HepG2 (cell line): ENCODE measurements at regions of chr14 and their contacts with region 1.

Region 1: DNA sequence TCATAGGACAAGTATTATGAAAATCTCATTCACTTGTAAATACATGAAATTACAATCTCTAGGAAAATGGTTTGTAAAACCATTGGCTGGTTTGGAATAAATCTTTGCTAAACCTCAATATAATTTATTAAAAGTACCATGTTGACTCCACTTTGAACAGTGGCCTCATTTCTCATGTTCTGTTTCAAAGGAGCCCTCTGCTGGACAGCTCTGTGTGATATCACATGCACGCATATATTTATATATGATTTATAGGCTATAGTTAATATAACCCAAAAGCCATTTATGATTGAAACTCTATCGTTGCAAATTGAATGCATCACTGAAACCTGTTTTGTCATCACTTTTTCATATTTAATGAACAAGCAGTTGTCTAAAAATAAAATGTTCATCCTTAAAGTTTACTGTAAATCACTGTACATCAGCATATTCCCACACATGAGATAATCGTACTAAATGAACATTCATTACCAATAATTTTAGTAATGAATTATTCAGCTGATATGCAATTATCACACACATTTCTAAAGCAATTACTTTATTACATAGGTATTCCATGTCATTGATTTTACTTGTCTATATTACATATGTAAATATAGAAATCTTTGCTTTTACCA is 493.8 kb downstream of the NPAS3 start:
- DNase-seq: peak; percentile 42
- ATAC-seq: peak; percentile 69
- H3K4me3 ChIP-seq: no peak overlapping the region
- H3K27ac ChIP-seq: no peak overlapping the region
- H3K4me1 ChIP-seq: no peaks in the 10 kb centered on the region
- H3K27me3 ChIP-seq: no peaks in the 10 kb centered on the region; a peak in 1 of 5 replicates
- CTCF ChIP-seq: peak; percentile 32
- EP300 ChIP-seq: no peak
- POLR2A ChIP-seq: no peak
- RAD21 ChIP-seq: no peak

Region 2: GRCh38 chr14:32588448-32589320 is 843.8 kb before region 1 on chr14:
- CTCF ChIA-PET with region 1: no interaction called
- POLR2A ChIA-PET with region 1: no interaction called
- in situ Hi-C with region 1: no loop called
- intact Hi-C with region 1: loop called (anchors 1 kb)
- DNase-seq: peak; percentile 43
- ATAC-seq: peak; percentile 79
- H3K4me3 ChIP-seq: no peak overlapping the region
- H3K27ac ChIP-seq: no peak overlapping the region
- H3K4me1 ChIP-seq: no peaks in the 10 kb centered on the region
- H3K27me3 ChIP-seq: no peaks in the 10 kb centered on the region
- CTCF ChIP-seq: peak; percentile 88
- EP300 ChIP-seq: no peak
- POLR2A ChIP-seq: no peak
- RAD21 ChIP-seq: no peak; the same call in 1 of the 2 replicates

Region 3: GRCh38 chr14:32710731-32711680 is 721.5 kb before region 1 on chr14:
- CTCF ChIA-PET with region 1: interaction called, 10 read pairs
- POLR2A ChIA-PET with region 1: no interaction called
- in situ Hi-C with region 1: no loop called
- intact Hi-C with region 1: loop called (anchors 1 kb)
- DNase-seq: peak; percentile 62
- ATAC-seq: peak; percentile 94
- H3K4me3 ChIP-seq: no peak overlapping the region
- H3K27ac ChIP-seq: no peak overlapping the region
- H3K4me1 ChIP-seq: no peaks in the 10 kb centered on the region
- H3K27me3 ChIP-seq: no peaks in the 10 kb centered on the region
- CTCF ChIP-seq: peak; percentile 79
- EP300 ChIP-seq: no peak
- POLR2A ChIP-seq: no peak
- RAD21 ChIP-seq: no peak